Transverse colon (tissue), 4 donors: ENCODE measurements at regions of chr12 and their contacts with region 1.

Region 1: GRCh38 chr12:103965590-103966504 is at the start of gene TDG:
- DNase-seq: peak; percentile 98
- H3K4me3 ChIP-seq: peak within 1 kb of the TSS; percentile 68 to 94 (median 88)
- H3K27ac ChIP-seq: peak within 1 kb of the TSS; percentile 95 to 99 (median 98)
- H3K4me1 ChIP-seq: peaks cover 20 to 50% (median 21%) of the 10 kb centered on the region in 4 donors
- H3K27me3 ChIP-seq: no peaks in the 10 kb centered on the region
- CTCF ChIP-seq: peak in 4 of 5 experiments; percentile 11 to 38 (median 22)
- EP300 ChIP-seq: no peak
- POLR2A ChIP-seq: peak; percentile 92
- total RNA-seq, gene TDG: 17.9 to 43.4 (median 26.1) TPM

Region 2: DNA sequence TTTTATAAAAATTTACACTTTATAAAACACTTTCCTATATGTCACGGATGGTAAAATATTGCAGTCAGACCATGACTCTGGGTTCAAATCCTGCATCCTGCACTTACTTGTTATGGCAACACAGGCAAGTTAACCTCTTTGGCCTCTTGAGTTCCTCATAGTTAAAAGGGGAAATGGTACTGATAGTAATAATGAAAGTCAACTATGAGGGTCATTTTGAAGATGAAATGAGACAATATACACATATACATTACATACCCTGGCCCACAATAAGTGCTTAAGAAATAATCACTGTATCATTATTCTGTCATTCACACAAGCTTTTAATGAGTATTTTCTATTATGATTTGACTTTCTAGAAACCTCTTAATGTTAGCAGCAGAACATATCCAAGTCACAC is 534.5 kb before region 1 on chr12:
- in situ Hi-C with region 1: no loop called
- intact Hi-C with region 1: no loop called
- DNase-seq: no peak
- H3K4me3 ChIP-seq: no peak overlapping the region
- H3K27ac ChIP-seq: no peak overlapping the region
- H3K4me1 ChIP-seq: no peaks in the 10 kb centered on the region
- H3K27me3 ChIP-seq: no peaks in the 10 kb centered on the region
- CTCF ChIP-seq: no peak
- EP300 ChIP-seq: no peak
- POLR2A ChIP-seq: no peak

Region 3: GRCh38 chr12:104108755-104109445 is 143.1 kb after region 1 on chr12:
- in situ Hi-C with region 1: no loop called
- intact Hi-C with region 1: loop called (anchors 10 kb)
- DNase-seq: peak; percentile 86
- H3K4me3 ChIP-seq: no peak overlapping the region
- H3K27ac ChIP-seq: no peak overlapping the region
- H3K4me1 ChIP-seq: peaks cover 0 to 5% (median 0%) of the 10 kb centered on the region in 4 donors
- H3K27me3 ChIP-seq: no peaks in the 10 kb centered on the region
- CTCF ChIP-seq: peak; percentile 73 to 89 (median 83)
- EP300 ChIP-seq: no peak
- POLR2A ChIP-seq: no peak

Region 4: DNA sequence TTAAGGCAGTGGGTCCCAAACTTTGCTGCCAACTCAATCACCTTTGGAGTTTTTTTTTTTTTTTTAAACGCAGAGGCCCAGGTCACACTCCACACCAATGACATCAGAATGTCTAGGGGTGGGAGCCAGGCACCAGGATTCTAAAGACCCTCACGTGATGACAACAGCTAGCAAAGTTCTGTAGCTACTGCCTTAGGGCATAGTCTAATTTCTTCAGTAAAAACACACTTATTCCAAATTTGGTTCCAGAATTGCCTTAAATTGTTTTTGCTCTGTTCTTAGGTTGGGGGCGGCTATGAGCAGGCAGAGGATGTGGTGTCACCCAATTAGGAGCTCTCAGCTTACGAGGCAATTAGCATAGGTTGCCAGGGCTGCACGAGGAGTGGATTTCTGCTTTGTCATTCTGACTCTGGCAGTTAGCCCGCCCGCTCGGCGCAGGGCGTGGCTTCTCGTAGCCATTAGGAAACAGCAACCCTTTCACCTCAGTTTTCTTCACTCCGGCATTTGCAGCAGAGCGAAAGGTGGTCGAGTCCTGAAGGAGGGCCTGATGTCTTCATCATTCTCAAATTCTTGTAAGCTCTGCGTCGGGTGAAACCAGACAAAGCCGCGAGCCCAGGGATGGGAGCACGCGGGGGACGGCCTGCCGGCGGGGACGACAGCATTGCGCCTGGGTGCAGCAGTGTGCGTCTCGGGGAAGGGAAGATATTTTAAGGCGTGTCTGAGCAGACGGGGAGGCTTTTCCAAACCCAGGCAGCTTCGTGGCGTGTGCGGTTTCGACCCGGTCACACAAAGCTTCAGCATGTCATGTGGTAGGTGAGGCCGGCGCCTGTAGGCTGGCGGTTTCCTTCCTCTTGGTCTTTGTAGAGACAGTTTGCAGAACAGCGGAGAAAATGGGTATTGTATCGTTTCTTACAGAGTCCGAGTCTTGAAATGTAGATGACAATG is 321.0 kb after region 1 on chr12:
- in situ Hi-C with region 1: loop called in 1 of 4 experiments (anchors 25 kb)
- intact Hi-C with region 1: no loop called
- DNase-seq: peak; percentile 96
- H3K4me3 ChIP-seq: peak overlapping the region; percentile 55 to 75 (median 68)
- H3K27ac ChIP-seq: peak overlapping the region; percentile 94 to 97 (median 96)
- H3K4me1 ChIP-seq: peaks cover 18 to 39% (median 28%) of the 10 kb centered on the region in 4 donors
- H3K27me3 ChIP-seq: no peaks in the 10 kb centered on the region
- CTCF ChIP-seq: peak in 1 of 5 experiments; percentile 11
- EP300 ChIP-seq: no peak
- POLR2A ChIP-seq: peak; percentile 91

Region 5: GRCh38 chr12:105107494-105108371 is 1141.9 kb after region 1 on chr12 and contains the start of gene WASHC4:
- in situ Hi-C with region 1: loop called in 1 of 4 experiments (anchors 25 kb)
- intact Hi-C with region 1: no loop called
- DNase-seq: peak; percentile 96
- H3K4me3 ChIP-seq: peak within 1 kb of the TSS; percentile 84 to 98 (median 88)
- H3K27ac ChIP-seq: peak within 1 kb of the TSS; percentile 98 to 100 (median 100)
- H3K4me1 ChIP-seq: peaks cover 0 to 43% (median 25%) of the 10 kb centered on the region in 4 donors
- H3K27me3 ChIP-seq: peaks cover 7% of the 10 kb centered on the region
- CTCF ChIP-seq: no peak
- EP300 ChIP-seq: no peak
- POLR2A ChIP-seq: peak; percentile 99
- total RNA-seq, gene WASHC4: 18.0 to 70.3 (median 44.3) TPM